Activated CD4-positive, alpha-beta memory T cell treated with anti-CD3 and anti-CD28 coated beads, Interleukin-2, amount 10 ng/mL, durations not matched to agents 7 days and 5 days (primary cell): ENCODE measurements at regions of chr9 and their contacts with region 1.

Region 1: GRCh38 chr9:36407122-36407723 is 7.2 kb upstream of the RNF38 start:
- DNase-seq: peak; percentile 60
- H3K4me3 Mint-ChIP-seq: no peak overlapping the region
- H3K27ac Mint-ChIP-seq: peak overlapping the region; percentile 27
- H3K4me1 Mint-ChIP-seq: peaks cover 6% of the 10 kb centered on the region
- H3K27me3 Mint-ChIP-seq: no peaks in the 10 kb centered on the region

Region 2: DNA sequence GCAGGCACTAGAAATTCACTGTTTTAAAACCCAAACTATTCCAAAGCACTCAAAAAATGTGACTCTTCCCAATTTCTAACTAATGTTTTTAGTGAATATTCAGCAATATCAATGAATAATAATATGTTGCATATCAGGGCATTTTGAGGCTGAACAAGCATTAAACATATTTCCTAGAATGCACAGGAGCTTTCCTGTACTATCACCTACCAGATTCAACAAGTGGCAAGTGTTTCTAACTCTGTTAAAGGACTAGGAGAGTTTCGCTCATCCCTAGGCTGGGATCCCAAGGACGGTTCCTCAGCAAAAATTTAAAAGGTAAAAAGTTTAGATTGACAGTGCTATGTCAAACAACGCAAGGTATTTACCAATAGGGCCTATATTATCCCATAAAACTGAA is 170.0 kb before region 1 on chr9:
- CTCF ChIA-PET with region 1: no interaction called
- POLR2A ChIA-PET with region 1: no interaction called
- DNase-seq: no peak
- H3K4me3 Mint-ChIP-seq: no peak overlapping the region
- H3K27ac Mint-ChIP-seq: no peak overlapping the region
- H3K4me1 Mint-ChIP-seq: peaks cover 3% of the 10 kb centered on the region
- H3K27me3 Mint-ChIP-seq: no peaks in the 10 kb centered on the region

Region 3: DNA sequence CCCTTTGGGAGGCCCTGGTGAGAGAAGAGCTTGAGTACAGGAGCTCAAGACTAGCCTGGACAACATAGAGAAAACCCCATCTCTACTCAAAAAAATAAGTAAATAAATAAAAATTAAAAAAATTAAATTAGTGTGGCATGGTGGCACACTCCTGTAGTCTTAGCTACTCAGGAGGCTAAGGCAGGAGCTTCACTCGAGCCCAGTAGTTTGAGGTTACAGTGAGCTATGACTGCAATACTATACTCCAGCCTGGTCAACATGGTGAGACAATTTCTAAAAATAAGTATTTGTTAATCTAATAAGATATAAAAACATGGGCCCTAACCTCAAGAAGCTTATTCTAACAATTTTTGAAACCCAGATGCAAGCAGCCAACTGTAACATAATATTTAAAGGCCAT is 14.7 kb before region 1 on chr9:
- CTCF ChIA-PET with region 1: interaction called, 14 read pairs
- POLR2A ChIA-PET with region 1: no interaction called
- DNase-seq: no peak
- H3K4me3 Mint-ChIP-seq: no peak overlapping the region
- H3K27ac Mint-ChIP-seq: no peak overlapping the region
- H3K4me1 Mint-ChIP-seq: peaks cover 48% of the 10 kb centered on the region
- H3K27me3 Mint-ChIP-seq: no peaks in the 10 kb centered on the region

Region 4: GRCh38 chr9:36441966-36442365 is 34.7 kb after region 1 on chr9:
- CTCF ChIA-PET with region 1: interaction called, 19 read pairs
- POLR2A ChIA-PET with region 1: no interaction called
- DNase-seq: no peak
- H3K4me3 Mint-ChIP-seq: no peak overlapping the region
- H3K27ac Mint-ChIP-seq: no peak overlapping the region
- H3K4me1 Mint-ChIP-seq: peaks cover 28% of the 10 kb centered on the region
- H3K27me3 Mint-ChIP-seq: no peaks in the 10 kb centered on the region

Region 5: GRCh38 chr9:36461323-36461722 is 54.1 kb after region 1 on chr9:
- CTCF ChIA-PET with region 1: interaction called, 22 read pairs
- POLR2A ChIA-PET with region 1: no interaction called
- DNase-seq: no peak
- H3K4me3 Mint-ChIP-seq: no peak overlapping the region
- H3K27ac Mint-ChIP-seq: peak overlapping the region; percentile 65
- H3K4me1 Mint-ChIP-seq: peaks cover 57% of the 10 kb centered on the region
- H3K27me3 Mint-ChIP-seq: no peaks in the 10 kb centered on the region

Region 6: GRCh38 chr9:36551129-36551528 is 143.9 kb after region 1 on chr9:
- CTCF ChIA-PET with region 1: interaction called, 193 read pairs
- POLR2A ChIA-PET with region 1: interaction called, 11 read pairs
- DNase-seq: no peak
- H3K4me3 Mint-ChIP-seq: no peak overlapping the region
- H3K27ac Mint-ChIP-seq: no peak overlapping the region
- H3K4me1 Mint-ChIP-seq: peaks cover 2% of the 10 kb centered on the region
- H3K27me3 Mint-ChIP-seq: peaks cover 20% of the 10 kb centered on the region

Region 7: DNA sequence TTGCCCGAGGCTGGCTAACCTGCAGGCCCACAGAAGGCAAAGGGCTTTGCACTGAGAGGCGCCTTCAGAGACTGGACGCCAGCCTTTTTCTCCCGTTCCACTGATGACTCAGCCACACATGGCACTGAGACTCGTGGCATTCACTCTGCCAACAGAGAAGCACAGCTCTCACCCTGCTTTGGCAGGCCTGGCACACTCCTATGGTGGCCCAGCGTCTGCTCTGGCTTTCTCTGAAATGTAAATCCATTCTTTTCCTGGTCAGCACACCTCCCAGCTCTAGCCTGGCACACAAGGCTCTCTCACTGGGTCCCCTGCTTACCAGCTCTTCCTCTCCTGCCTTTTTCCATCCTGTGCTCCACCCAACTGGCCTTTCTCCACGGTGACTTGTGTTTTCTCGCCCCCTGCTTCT is 159.6 kb after region 1 on chr9:
- CTCF ChIA-PET with region 1: interaction called, 11 read pairs
- POLR2A ChIA-PET with region 1: no interaction called
- DNase-seq: no peak
- H3K4me3 Mint-ChIP-seq: no peak overlapping the region
- H3K27ac Mint-ChIP-seq: no peak overlapping the region
- H3K4me1 Mint-ChIP-seq: peaks cover 3% of the 10 kb centered on the region
- H3K27me3 Mint-ChIP-seq: peaks cover 5% of the 10 kb centered on the region

Region 8: DNA sequence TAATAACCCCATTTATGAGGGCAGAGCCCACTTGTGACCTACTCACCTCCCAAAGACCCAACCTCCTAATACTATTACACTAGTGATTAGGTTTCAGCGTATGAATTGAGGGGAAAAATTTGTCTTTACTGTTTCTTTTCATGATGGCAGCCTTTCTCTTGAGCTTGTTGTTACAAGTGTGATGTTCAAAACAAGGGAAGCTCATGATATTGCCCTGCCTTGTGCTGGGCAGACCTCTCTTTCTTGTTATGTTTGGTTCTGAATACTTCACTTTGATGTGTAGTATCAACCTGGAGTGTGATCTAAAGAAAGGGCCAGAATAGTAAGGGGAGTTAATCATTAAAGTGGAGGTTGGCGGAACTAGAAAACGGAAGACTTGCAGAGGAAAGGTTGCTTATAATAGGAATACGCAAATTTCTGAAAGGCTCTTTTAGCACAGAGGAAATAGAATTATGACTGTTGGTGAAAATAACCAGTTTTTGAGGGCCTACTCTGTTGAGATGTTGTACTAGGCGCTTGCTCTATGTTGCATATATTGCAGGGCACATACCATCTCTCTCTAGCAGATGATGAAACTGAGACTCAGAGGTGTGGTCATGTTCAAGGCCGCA is 233.7 kb after region 1 on chr9:
- CTCF ChIA-PET with region 1: no interaction called
- POLR2A ChIA-PET with region 1: no interaction called
- DNase-seq: no peak
- H3K4me3 Mint-ChIP-seq: no peak overlapping the region
- H3K27ac Mint-ChIP-seq: no peak overlapping the region
- H3K4me1 Mint-ChIP-seq: peaks cover 13% of the 10 kb centered on the region
- H3K27me3 Mint-ChIP-seq: no peaks in the 10 kb centered on the region